A673 (cell line): ENCODE measurements at regions of chrX and their contacts with region 1.

Region 1: DNA sequence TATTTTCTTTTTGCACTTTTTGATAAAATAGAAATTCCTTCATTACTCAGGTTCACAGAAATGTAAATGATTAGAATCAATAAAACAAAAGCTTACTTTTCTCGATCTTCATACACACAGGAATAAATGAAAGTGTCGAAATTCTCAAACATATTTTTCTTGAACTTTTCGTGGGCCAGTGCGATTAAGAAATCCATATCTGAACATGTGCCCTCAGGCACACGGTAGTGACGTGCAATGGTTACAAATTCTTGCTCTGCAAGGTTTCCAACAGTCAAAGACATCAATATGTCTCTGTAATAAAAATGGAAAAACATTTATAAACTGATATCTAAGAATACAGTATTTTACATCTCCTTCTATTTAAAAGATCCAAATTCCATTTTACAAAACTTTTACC is 165.2 kb downstream of the EFHC2 start:
- DNase-seq: no peak
- H3K4me3 ChIP-seq: no peak overlapping the region
- H3K27ac ChIP-seq: no peak overlapping the region
- H3K4me1 ChIP-seq: no peaks in the 10 kb centered on the region
- H3K27me3 ChIP-seq: no peaks in the 10 kb centered on the region
- CTCF ChIP-seq: no peak

Region 2: DNA sequence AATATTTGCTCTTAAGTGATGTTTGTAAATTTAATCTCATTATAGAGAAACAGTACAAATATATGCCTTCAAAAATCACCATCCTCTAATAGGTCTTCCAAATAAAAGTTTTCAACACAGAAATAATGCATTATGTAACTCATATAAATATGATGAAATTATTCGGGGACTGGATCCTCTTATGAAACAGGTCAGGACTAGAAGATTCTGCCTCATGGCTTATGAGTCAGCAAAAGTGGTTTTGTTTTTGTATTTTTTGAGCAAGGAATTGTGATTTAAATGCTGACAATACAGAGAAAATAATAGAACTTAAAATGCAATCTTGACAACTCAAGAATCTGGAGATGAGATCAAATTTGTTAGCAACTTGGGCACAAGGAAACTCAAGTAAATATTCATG is 25.4 kb before region 1 on chrX:
- CTCF ChIA-PET with region 1: no interaction called
- POLR2A ChIA-PET with region 1: no interaction called
- intact Hi-C with region 1: no loop called
- DNase-seq: no peak
- H3K4me3 ChIP-seq: no peak overlapping the region
- H3K27ac ChIP-seq: no peak overlapping the region
- H3K4me1 ChIP-seq: peaks cover 22% of the 10 kb centered on the region
- H3K27me3 ChIP-seq: peaks cover 4% of the 10 kb centered on the region
- CTCF ChIP-seq: no peak

Region 3: GRCh38 chrX:44244008-44244407 is 65.7 kb after region 1 on chrX:
- CTCF ChIA-PET with region 1: no interaction called
- POLR2A ChIA-PET with region 1: no interaction called
- intact Hi-C with region 1: no loop called
- DNase-seq: peak; percentile 72
- H3K4me3 ChIP-seq: no peak overlapping the region
- H3K27ac ChIP-seq: no peak overlapping the region
- H3K4me1 ChIP-seq: no peaks in the 10 kb centered on the region
- H3K27me3 ChIP-seq: no peaks in the 10 kb centered on the region
- CTCF ChIP-seq: peak; percentile 76

Region 4: GRCh38 chrX:44338361-44338760 is 160.1 kb after region 1 on chrX:
- CTCF ChIA-PET with region 1: no interaction called
- POLR2A ChIA-PET with region 1: no interaction called
- intact Hi-C with region 1: loop called (anchors 5 kb)
- DNase-seq: no peak
- H3K4me3 ChIP-seq: no peak overlapping the region
- H3K27ac ChIP-seq: no peak overlapping the region
- H3K4me1 ChIP-seq: peaks cover 4% of the 10 kb centered on the region
- H3K27me3 ChIP-seq: no peaks in the 10 kb centered on the region
- CTCF ChIP-seq: no peak